ENCODE measurements at regions of chr3 and their contacts with region 1.

Region 1: DNA sequence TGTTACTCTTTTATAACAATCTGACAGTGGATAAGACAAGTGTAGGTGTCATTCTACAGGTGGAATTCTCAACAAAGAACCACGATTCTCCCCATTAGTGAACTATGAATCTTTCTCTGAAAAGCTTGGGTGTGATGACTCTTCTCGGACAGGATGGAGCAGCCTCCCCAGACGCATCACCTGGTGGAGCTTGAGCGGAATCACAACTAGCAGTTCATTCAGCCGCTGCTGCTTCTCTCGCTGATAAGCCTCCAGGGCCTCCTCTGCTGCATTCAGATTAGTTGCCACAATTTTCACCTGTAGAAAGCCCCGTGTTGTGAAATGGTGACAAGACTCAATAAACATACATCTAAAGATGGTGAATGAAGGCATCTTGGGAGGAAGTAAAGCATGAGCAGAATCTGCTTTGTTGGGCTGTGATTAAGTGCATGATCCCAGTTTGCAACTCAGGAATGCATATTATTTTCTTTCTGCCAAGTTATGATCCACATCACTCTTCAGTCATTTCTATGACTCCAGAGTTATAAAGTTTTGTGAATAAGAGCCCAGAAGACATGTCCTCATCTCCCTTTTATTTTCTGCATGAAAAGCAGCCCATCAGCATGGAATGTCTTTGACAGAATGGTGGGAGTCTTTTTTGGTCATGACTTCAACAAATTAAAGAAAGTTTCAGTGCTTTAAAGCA is 93.6 kb downstream of the BOC start:
- DNase-seq: no peak
- H3K4me3 ChIP-seq: no peak overlapping the region
- H3K27ac ChIP-seq: no peak overlapping the region
- H3K4me1 ChIP-seq: no peaks in the 10 kb centered on the region
- CTCF ChIP-seq: no peak

Region 2: DNA sequence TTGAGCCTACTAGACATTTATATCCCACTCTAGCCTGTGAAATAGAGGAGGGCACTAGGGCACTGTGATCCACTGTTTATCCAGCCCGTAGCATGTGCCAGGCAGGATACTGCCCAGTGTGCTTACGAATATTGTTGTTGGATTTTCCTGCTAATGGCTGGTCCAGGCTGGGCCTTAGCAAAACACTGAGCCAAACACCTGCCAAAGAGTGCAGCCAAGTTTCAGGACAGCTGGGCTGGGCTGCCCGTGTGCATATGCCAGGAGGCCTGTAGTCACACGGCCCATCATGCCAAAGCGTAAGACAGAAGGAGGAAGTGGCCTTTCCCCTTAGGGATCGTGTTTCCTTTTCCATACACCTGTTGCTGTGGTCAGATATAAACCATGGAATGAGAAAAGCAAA is 1380.7 kb before region 1 on chr3:
- CTCF ChIA-PET with region 1: no interaction called
- POLR2A ChIA-PET with region 1: no interaction called
- intact Hi-C with region 1: no loop called
- DNase-seq: no peak
- H3K4me3 ChIP-seq: no peak overlapping the region
- H3K27ac ChIP-seq: no peak overlapping the region
- H3K4me1 ChIP-seq: no peaks in the 10 kb centered on the region
- CTCF ChIP-seq: no peak

Region 3: GRCh38 chr3:113261626-113262303 is 43.2 kb before region 1 on chr3:
- CTCF ChIA-PET with region 1: no interaction called
- POLR2A ChIA-PET with region 1: no interaction called
- intact Hi-C with region 1: loop called (anchors 2 kb)
- DNase-seq: no peak
- H3K4me3 ChIP-seq: no peak overlapping the region
- H3K27ac ChIP-seq: no peak overlapping the region
- H3K4me1 ChIP-seq: no peaks in the 10 kb centered on the region
- CTCF ChIP-seq: no peak

Measured in OCI-LY7 (cell line).